ENCODE measurements at regions of chr1 and their contacts with region 1.

Region 1: DNA sequence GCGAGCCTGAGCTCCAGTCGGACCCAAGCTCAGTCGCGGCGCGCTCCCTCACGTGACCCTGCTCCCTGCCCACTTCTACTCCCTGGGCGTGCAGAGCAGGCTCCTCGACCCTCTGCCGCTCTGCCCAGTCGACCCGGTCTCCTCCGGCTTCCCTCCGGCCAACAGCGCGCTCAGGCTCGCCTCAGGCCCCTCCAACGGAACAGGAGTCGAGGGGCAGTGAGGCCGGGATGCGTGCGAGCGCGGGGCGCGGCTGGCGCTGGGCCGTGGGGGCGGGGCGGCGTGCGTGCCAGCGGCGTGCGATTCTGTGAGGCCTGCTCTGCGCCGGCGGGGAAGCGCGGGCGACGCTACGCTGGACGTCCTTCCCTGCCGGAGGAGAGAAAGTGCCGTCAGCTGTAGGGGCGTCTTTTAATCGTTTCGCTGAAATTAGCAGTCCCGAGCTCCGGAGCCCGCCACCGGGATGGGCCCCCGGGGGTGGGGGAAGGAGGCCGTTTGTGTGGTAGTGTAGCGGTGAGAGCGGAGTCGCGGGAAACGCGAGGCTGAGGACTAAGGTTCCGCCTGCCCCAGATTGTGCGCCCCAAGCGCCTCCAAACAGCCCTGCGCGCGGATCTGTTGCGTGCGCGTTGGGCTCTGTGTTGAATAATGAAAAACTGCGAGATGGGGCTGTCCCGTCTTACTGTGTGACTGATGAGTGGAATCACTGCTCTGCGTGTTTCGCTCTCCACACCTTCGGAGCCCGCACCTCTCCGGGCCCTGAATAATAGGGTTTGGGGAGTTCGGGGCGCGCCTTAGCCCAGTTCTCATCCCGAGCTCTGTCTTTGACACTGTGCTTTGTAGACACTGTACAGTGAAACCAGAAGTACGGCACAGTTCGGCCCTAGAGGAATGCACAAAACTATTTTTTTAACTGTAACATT is at the start of gene ACBD6:
- DNase-seq: peak; percentile 94
- H3K4me3 Mint-ChIP-seq: peak within 1 kb of the TSS; percentile 94
- H3K27ac Mint-ChIP-seq: peak within 1 kb of the TSS; percentile 97
- H3K4me1 Mint-ChIP-seq: peaks cover 29% of the 10 kb centered on the region
- H3K27me3 Mint-ChIP-seq: no peaks in the 10 kb centered on the region
- CTCF ChIP-seq: no peak
- total RNA-seq, gene ACBD6: 123 and 136 TPM in 2 replicates

Region 2: GRCh38 chr1:180521474-180522207 is 19.0 kb after region 1 on chr1:
- CTCF ChIA-PET with region 1: interaction called, 86 read pairs
- POLR2A ChIA-PET with region 1: interaction called, 151 read pairs
- intact Hi-C with region 1: no loop called
- DNase-seq: peak; percentile 96
- H3K4me3 Mint-ChIP-seq: peak overlapping the region; percentile 34
- H3K27ac Mint-ChIP-seq: peak overlapping the region; percentile 82
- H3K4me1 Mint-ChIP-seq: peaks cover 61% of the 10 kb centered on the region
- H3K27me3 Mint-ChIP-seq: no peaks in the 10 kb centered on the region
- CTCF ChIP-seq: no peak